ENCODE measurements at regions of chr7 and their contacts with region 1.

Region 1: DNA sequence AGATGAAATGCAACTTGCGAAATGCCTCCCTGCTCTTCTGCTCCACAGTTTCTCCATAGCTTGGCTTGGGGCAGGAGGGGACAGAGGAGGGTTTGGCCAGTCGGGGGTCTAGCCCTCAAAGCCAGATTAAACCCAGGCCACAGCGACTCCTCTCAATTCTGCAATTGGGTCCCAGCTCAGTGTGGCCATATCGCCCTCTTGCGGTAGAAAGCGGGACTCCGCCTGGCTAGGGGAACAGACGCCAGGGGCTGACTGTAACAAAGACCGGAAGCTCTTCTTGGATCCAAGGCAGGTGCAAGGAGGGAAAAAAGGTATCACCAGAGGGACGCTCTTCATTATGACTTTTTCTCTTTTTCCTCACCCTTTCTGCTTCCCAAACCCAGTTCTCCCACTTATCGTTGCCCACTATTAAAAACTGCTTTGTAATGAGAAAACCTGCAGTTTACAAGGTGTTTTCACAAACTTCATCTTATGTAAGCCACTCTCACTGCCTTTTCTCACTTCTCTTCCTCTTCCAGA is 36.6 kb upstream of the TNPO3 start:
- DNase-seq: peak; percentile 95
- H3K4me3 Mint-ChIP-seq: no peak overlapping the region
- H3K27ac Mint-ChIP-seq: peak overlapping the region; percentile 20
- H3K4me1 Mint-ChIP-seq: peaks cover 17% of the 10 kb centered on the region
- H3K27me3 Mint-ChIP-seq: no peaks in the 10 kb centered on the region

Region 2: DNA sequence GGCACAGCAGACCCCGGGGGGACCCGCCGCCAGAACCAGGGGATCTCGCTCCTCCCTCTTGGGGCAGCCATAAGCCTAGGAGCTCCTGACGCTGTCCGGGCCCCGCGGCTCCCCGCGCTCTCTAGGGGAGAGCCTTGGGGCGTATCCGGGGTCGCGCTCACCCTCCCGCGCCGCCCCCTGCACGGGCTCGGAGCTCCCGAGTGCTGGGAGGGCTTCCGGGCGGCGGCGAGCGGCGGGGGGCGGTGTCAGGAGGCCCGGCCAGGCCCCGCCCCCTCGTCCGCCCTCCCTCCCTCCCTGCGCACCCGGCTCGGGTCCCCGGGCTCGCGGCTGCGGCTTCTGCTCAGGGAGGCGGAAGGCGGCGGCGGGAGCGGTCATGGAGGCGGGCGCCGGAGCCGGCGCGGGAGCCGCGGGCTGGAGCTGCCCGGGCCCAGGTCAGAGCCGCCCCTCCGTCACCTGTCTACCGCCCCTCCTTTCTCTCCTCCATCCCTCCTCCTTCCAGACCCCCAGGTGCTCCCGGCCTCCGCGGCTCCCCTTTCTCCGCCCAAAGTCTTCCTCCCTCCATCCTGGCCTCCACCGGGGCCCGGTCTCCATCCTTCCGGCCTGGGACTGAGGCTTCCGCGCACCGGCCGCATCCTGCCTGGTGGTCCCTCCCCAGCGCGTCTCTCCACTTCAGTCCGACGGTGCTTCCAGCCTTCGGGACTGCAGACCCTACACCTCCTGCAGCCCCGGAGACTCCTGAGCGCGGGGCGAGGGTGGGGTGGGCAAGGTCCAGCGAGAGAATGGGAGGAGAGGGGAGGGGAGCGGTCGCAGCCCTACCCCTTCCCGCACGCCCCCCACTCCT is 300.2 kb before region 1 on chr7:
- CTCF ChIA-PET with region 1: no interaction called
- intact Hi-C with region 1: loop called (anchors 5 kb)
- DNase-seq: peak; percentile 79
- H3K4me3 Mint-ChIP-seq: peak overlapping the region; percentile 82
- H3K27ac Mint-ChIP-seq: no peak overlapping the region
- H3K4me1 Mint-ChIP-seq: peaks cover 3% of the 10 kb centered on the region
- H3K27me3 Mint-ChIP-seq: peaks cover 3% of the 10 kb centered on the region

Region 3: GRCh38 chr7:128899392-128899791 is 192.2 kb before region 1 on chr7:
- CTCF ChIA-PET with region 1: interaction called, 21 read pairs
- intact Hi-C with region 1: loop called (anchors 1 kb)
- DNase-seq: no peak
- H3K4me3 Mint-ChIP-seq: no peak overlapping the region
- H3K27ac Mint-ChIP-seq: no peak overlapping the region
- H3K4me1 Mint-ChIP-seq: no peaks in the 10 kb centered on the region
- H3K27me3 Mint-ChIP-seq: peaks cover 5% of the 10 kb centered on the region

Region 4: GRCh38 chr7:128963327-128963757 is 128.2 kb before region 1 on chr7:
- CTCF ChIA-PET with region 1: interaction called, 4 read pairs
- intact Hi-C with region 1: loop called (anchors 1 kb)
- DNase-seq: peak; percentile 80
- H3K4me3 Mint-ChIP-seq: peak overlapping the region; percentile 6
- H3K27ac Mint-ChIP-seq: peak overlapping the region; percentile 87
- H3K4me1 Mint-ChIP-seq: peaks cover 35% of the 10 kb centered on the region
- H3K27me3 Mint-ChIP-seq: no peaks in the 10 kb centered on the region

Region 5: GRCh38 chr7:129054438-129055293 is 36.9 kb before region 1 on chr7 and contains the start of gene TNPO3:
- CTCF ChIA-PET with region 1: interaction called, 14 read pairs
- intact Hi-C with region 1: no loop called
- DNase-seq: peak; percentile 95
- H3K4me3 Mint-ChIP-seq: peak within 1 kb of the TSS; percentile 95
- H3K27ac Mint-ChIP-seq: peak within 1 kb of the TSS; percentile 99
- H3K4me1 Mint-ChIP-seq: peaks cover 35% of the 10 kb centered on the region
- H3K27me3 Mint-ChIP-seq: peaks cover 3% of the 10 kb centered on the region
- total RNA-seq, gene TNPO3: 65.7 to 66.4 TPM

Region 6: DNA sequence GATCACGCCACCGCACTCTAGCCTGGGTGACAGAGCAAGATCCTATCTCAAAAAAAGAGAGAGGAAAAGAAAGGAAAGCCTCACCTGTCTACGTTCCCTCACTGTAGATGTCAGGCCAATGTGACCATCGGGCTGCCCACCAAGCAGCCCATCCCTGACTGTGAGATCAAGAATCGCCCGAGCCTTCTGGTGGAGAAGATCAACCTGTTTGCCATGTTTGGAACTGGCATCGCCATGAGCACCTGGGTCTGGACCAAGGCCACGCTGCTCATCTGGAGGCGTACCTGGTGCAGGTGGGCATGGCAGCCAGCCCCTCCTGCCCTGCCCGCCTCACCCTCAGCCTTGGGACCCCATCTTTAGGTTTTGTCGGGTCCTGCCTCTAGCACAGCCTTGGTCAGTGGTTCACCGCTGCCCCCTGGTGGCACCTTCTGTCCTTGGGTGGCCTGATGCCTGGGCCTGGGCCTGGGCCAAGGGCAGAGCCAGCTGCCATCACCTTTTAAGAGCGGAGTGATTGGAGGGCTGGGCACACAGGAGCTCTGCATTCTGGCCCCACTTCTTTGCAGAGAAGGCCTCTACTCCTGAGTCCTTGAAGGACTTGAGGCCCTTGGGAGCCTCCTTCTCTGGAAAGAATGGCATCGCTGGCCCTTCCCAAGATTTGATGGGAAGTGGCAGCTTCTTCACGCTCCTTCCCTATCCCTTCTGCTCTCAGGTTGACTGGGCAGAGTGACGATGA is 118.9 kb after region 1 on chr7:
- CTCF ChIA-PET with region 1: interaction called, 7 read pairs
- intact Hi-C with region 1: loop called (anchors 1 kb)
- DNase-seq: peak; percentile 86
- H3K4me3 Mint-ChIP-seq: no peak overlapping the region
- H3K27ac Mint-ChIP-seq: no peak overlapping the region
- H3K4me1 Mint-ChIP-seq: no peaks in the 10 kb centered on the region
- H3K27me3 Mint-ChIP-seq: no peaks in the 10 kb centered on the region

Region 7: GRCh38 chr7:129343099-129343700 is 251.7 kb after region 1 on chr7:
- CTCF ChIA-PET with region 1: no interaction called
- intact Hi-C with region 1: no loop called
- DNase-seq: peak; percentile 39
- H3K4me3 Mint-ChIP-seq: no peak overlapping the region
- H3K27ac Mint-ChIP-seq: no peak overlapping the region
- H3K4me1 Mint-ChIP-seq: peaks cover 32% of the 10 kb centered on the region
- H3K27me3 Mint-ChIP-seq: no peaks in the 10 kb centered on the region